MCF 10A (cell line): ENCODE measurements at regions of chr2 and their contacts with region 1.

Region 1: DNA sequence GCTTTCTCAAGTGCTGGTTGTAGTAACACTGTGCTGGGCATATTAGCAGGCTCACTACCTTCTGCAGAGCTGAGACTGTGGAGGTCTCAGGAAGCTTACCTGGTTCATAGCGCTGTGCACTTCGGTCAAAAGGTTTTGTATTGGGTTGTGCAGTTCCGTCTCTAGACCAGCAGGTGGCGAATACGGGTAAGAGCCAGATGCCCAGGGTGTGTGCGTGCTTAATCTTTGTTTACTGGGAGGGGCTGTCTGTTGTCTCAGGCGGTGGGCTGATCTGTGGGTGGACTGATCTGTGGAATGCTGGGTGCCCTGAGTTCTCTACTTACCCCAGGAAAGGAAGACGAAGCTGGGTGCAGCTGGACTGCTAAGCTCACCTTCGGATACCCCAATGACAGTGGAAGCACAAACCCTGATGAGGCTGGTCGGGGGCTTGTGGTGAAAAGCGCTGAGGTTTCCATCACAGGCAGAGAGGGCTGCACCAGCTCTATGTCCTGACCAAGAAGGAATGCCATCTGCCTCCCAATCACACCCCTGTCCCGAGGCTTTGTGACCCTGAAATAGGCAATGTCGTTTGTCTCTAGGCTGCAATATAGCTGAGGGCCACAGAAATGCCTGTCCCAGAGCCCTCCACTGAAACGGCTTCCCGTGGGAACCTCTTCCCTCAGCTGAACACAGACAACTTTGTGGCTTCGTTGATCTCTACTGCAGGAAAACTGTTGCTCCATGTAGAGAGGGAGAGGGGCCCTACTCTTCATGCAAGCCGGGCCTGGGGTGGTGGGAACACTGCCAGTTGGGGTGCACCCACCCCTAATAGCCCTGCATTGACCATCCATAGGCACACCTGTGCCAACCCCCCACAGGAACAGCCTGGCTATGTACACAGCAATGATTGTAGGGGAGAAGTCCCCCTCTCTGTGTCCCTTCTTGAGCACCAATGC is 45.9 kb upstream of the FAM117B start:
- DNase-seq: peak; percentile 75
- H3K4me3 Mint-ChIP-seq: no peak overlapping the region
- H3K27ac Mint-ChIP-seq: no peak overlapping the region
- H3K4me1 Mint-ChIP-seq: peaks cover 7% of the 10 kb centered on the region
- H3K27me3 Mint-ChIP-seq: no peaks in the 10 kb centered on the region
- CTCF ChIP-seq: peak; percentile 96

Region 2: GRCh38 chr2:202634556-202635427 is 45.9 kb after region 1 on chr2 and contains the start of gene FAM117B:
- CTCF ChIA-PET with region 1: interaction called, 10 read pairs
- POLR2A ChIA-PET with region 1: interaction called, 19 read pairs
- intact Hi-C with region 1: no loop called
- DNase-seq: peak; percentile 97
- H3K4me3 Mint-ChIP-seq: peak within 1 kb of the TSS; percentile 95
- H3K27ac Mint-ChIP-seq: peak within 1 kb of the TSS; percentile 84
- H3K4me1 Mint-ChIP-seq: peaks cover 15% of the 10 kb centered on the region
- H3K27me3 Mint-ChIP-seq: no peaks in the 10 kb centered on the region
- CTCF ChIP-seq: no peak
- total RNA-seq, gene FAM117B: 2.4 and 2.5 TPM in 2 replicates

Region 3: GRCh38 chr2:202718614-202719013 is 129.7 kb after region 1 on chr2:
- CTCF ChIA-PET with region 1: interaction called, 12 read pairs
- POLR2A ChIA-PET with region 1: no interaction called
- intact Hi-C with region 1: no loop called
- DNase-seq: peak; percentile 49
- H3K4me3 Mint-ChIP-seq: no peak overlapping the region
- H3K27ac Mint-ChIP-seq: no peak overlapping the region
- H3K4me1 Mint-ChIP-seq: peaks cover 12% of the 10 kb centered on the region
- H3K27me3 Mint-ChIP-seq: no peaks in the 10 kb centered on the region
- CTCF ChIP-seq: no peak

Region 4: GRCh38 chr2:202824901-202825300 is 236.0 kb after region 1 on chr2:
- CTCF ChIA-PET with region 1: interaction called, 12 read pairs
- POLR2A ChIA-PET with region 1: no interaction called
- intact Hi-C with region 1: no loop called
- DNase-seq: no peak
- H3K4me3 Mint-ChIP-seq: no peak overlapping the region
- H3K27ac Mint-ChIP-seq: no peak overlapping the region
- H3K4me1 Mint-ChIP-seq: no peaks in the 10 kb centered on the region
- H3K27me3 Mint-ChIP-seq: no peaks in the 10 kb centered on the region
- CTCF ChIP-seq: no peak

Region 5: GRCh38 chr2:202870431-202871299 is 281.8 kb after region 1 on chr2:
- CTCF ChIA-PET with region 1: interaction called, 43 read pairs
- POLR2A ChIA-PET with region 1: interaction called, 8 read pairs
- intact Hi-C with region 1: loop called (anchors 1 kb)
- DNase-seq: peak; percentile 86
- H3K4me3 Mint-ChIP-seq: peak overlapping the region; percentile 72
- H3K27ac Mint-ChIP-seq: peak overlapping the region; percentile 57
- H3K4me1 Mint-ChIP-seq: peaks cover 5% of the 10 kb centered on the region
- H3K27me3 Mint-ChIP-seq: no peaks in the 10 kb centered on the region
- CTCF ChIP-seq: peak; percentile 52

Region 6: GRCh38 chr2:202932425-202933138 is 343.7 kb after region 1 on chr2:
- CTCF ChIA-PET with region 1: no interaction called
- POLR2A ChIA-PET with region 1: no interaction called
- intact Hi-C with region 1: no loop called
- DNase-seq: peak; percentile 90
- H3K4me3 Mint-ChIP-seq: peak overlapping the region; percentile 33
- H3K27ac Mint-ChIP-seq: peak overlapping the region; percentile 73
- H3K4me1 Mint-ChIP-seq: peaks cover 22% of the 10 kb centered on the region
- H3K27me3 Mint-ChIP-seq: no peaks in the 10 kb centered on the region
- CTCF ChIP-seq: no peak